ENCODE measurements at regions of chr5 and their contacts with region 1.

Region 1: DNA sequence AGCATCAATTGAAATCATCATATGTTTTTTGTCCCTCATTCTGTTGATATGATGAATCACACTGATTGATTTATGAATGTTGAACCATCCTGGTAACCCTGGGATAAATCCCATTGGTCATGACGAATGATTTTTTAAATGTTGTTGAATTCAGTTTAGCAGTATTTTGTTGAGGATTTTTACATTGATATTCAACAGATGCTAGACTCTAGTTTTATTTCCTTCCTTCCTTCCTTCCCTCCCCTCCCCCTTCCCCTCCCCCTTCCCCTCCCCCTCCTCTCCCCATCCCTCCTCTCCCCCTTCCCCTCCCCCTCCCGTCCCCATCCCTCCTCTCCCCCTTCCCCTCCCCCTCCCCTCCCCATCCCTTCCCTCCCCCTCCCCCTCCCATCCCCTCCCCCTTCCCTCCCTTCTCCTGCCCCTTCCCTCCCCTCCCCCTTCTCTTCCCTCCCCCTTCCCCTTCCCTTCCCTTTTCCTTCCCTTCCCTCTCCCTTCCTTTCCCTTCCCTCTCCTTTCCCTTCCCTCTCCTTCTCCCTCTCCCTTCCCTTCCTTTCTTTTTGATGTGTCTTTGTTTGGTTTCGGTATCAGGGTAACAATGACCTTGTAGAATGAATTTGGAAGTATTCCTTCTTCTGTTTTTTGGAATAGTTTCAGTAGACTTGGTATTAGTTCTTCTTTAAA is 142.8 kb downstream of the AP3B1 start:
- DNase-seq: no peak
- ATAC-seq: no peak
- H3K4me3 ChIP-seq: no peak overlapping the region
- H3K27ac ChIP-seq: no peak overlapping the region
- H3K4me1 ChIP-seq: no peaks in the 10 kb centered on the region
- H3K27me3 ChIP-seq: no peaks in the 10 kb centered on the region
- CTCF ChIP-seq: no peak

Region 2: GRCh38 chr5:78129597-78129996 is 22.1 kb before region 1 on chr5:
- intact Hi-C with region 1: loop called in 1 of 10 experiments (anchors 2 kb)
- DNase-seq: no peak
- ATAC-seq: no peak
- H3K4me3 ChIP-seq: no peak overlapping the region
- H3K27ac ChIP-seq: no peak overlapping the region
- H3K4me1 ChIP-seq: no peaks in the 10 kb centered on the region
- H3K27me3 ChIP-seq: no peaks in the 10 kb centered on the region
- CTCF ChIP-seq: no peak

Region 3: DNA sequence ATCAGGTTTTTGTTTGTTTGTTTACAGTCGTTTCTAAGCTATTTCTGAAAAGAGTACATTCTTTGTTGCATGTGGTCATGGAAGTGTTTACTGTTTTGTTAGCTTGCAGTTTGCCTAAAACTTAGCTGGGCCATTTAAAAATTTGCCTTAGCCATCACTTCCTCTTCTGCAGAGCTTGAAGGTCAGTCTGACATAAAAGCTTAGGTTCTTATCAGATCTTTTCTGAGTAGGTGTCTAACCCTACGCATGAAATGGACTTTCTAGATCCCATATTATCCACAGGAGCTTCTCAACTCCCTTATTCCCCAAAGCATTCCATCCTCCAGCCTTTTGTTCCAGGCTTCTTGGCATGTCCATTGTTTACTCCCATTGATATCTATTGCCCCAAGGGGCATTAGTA is 52.5 kb after region 1 on chr5:
- intact Hi-C with region 1: no loop called
- DNase-seq: no peak
- ATAC-seq: no peak
- H3K4me3 ChIP-seq: no peak overlapping the region
- H3K27ac ChIP-seq: no peak overlapping the region
- H3K4me1 ChIP-seq: no peaks in the 10 kb centered on the region
- H3K27me3 ChIP-seq: no peaks in the 10 kb centered on the region
- CTCF ChIP-seq: no peak

Measured in heart right ventricle (tissue), 16 donors.